Spleen (tissue), 13 donors: ENCODE measurements at regions of chr7 and their contacts with region 1.

Region 1: DNA sequence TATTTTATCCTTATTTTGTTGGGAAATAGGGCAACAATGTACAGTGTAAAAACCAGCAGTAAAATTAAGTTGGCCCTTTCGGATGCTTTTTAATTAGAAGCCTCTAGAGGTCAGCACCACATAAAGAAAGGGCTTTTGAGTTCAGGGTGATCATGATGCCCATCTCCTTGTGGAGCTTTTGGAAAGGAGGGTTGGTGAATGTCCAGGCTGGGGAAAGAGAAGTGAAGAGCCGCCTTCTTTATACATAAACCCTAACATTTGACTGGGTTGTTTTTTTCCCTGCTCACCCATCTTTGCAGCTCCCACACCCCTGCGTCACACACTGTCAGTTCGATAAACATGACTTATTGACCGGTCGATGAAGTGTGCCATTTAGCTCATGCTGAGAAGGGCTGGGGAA is 29.8 kb downstream of the MTURN start:
- DNase-seq: no peak
- H3K4me3 ChIP-seq: no peak overlapping the region
- H3K27ac ChIP-seq: peak overlapping the region in 4 of 8 donors; percentile 14 to 72 (median 42)
- H3K4me1 ChIP-seq: peaks cover 16 to 64% (median 47%) of the 10 kb centered on the region in 6 donors
- H3K27me3 ChIP-seq: no peaks in the 10 kb centered on the region
- CTCF ChIP-seq: peak; percentile 14 to 65 (median 55)
- POLR2A ChIP-seq: no peak

Region 2: GRCh38 chr7:29612596-29612995 is 552.0 kb before region 1 on chr7:
- intact Hi-C with region 1: no loop called
- DNase-seq: no peak
- H3K4me3 ChIP-seq: no peak overlapping the region
- H3K27ac ChIP-seq: no peak overlapping the region
- H3K4me1 ChIP-seq: no peaks in the 10 kb centered on the region
- H3K27me3 ChIP-seq: no peaks in the 10 kb centered on the region
- CTCF ChIP-seq: no peak
- POLR2A ChIP-seq: no peak

Region 3: GRCh38 chr7:30276203-30276900 is 111.8 kb after region 1 on chr7:
- intact Hi-C with region 1: loop called (anchors 10 kb)
- DNase-seq: no peak
- H3K4me3 ChIP-seq: no peak overlapping the region
- H3K27ac ChIP-seq: no peak overlapping the region
- H3K4me1 ChIP-seq: peaks cover 0 to 32% (median 12%) of the 10 kb centered on the region in 6 donors
- H3K27me3 ChIP-seq: no peaks in the 10 kb centered on the region
- CTCF ChIP-seq: peak in 9 of 11 experiments; percentile 36 to 69 (median 57)
- POLR2A ChIP-seq: no peak

Region 4: DNA sequence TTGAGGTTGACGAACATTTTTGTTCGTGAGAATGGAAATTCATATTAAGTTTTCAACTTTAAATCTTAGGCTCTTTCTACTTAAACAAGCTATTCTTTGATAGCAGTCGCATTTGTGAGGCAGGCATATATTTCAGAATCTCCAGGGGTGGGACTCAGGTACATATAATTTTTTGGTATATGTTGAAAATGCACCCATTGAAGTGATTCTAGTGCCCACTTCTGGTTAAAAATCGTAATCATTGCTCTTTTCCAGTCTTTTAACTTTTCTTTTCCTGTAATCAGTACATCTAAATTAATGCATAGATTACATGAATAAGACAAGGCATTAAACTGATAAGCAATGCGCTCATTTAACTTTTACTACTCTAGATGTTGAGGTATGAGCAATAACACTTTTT is 187.6 kb after region 1 on chr7:
- intact Hi-C with region 1: loop called (anchors 10 kb)
- DNase-seq: no peak
- H3K4me3 ChIP-seq: no peak overlapping the region
- H3K27ac ChIP-seq: no peak overlapping the region
- H3K4me1 ChIP-seq: peaks cover 18 to 75% (median 49%) of the 10 kb centered on the region in 6 donors
- H3K27me3 ChIP-seq: no peaks in the 10 kb centered on the region
- CTCF ChIP-seq: peak in 2 of 11 experiments; percentile 31 to 34
- POLR2A ChIP-seq: no peak

Region 5: DNA sequence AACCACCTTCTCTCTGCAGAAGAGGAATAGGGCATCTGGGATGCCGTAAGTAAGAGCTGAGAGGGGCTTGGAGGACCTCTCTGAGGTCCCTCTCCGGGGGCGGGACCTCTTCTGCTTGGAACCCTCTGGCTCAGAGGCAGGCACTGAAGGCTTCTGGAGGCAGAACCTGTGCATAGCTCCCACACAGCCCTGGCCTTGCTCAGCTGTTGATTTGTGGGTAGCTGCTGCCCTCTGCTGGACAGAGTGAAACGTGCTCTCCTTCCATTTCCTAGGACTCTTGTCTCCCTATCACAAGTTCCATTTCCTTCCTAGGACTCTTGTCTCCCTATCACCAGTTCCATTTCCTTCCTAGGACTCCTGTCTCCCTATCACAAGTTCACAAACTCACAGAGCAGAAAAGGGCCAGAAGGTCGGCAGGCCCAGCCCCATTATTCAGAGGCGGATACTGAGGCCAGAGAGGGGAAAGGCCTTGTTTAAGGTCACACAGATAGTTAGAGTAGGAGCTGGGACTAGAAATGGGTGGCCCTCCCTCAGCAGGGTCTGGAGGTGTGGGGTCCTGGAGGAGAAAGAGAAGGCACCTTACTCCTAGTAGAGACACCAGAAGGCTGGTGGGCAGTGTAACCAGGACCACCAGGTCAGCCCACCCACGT is 399.8 kb after region 1 on chr7:
- intact Hi-C with region 1: loop called (anchors 10 kb)
- DNase-seq: peak; percentile 88
- H3K4me3 ChIP-seq: no peak overlapping the region
- H3K27ac ChIP-seq: no peak overlapping the region
- H3K4me1 ChIP-seq: peaks cover 0 to 28% (median 11%) of the 10 kb centered on the region in 6 donors
- H3K27me3 ChIP-seq: no peaks in the 10 kb centered on the region
- CTCF ChIP-seq: peak; percentile 65 to 92 (median 84)
- POLR2A ChIP-seq: no peak

Region 6: DNA sequence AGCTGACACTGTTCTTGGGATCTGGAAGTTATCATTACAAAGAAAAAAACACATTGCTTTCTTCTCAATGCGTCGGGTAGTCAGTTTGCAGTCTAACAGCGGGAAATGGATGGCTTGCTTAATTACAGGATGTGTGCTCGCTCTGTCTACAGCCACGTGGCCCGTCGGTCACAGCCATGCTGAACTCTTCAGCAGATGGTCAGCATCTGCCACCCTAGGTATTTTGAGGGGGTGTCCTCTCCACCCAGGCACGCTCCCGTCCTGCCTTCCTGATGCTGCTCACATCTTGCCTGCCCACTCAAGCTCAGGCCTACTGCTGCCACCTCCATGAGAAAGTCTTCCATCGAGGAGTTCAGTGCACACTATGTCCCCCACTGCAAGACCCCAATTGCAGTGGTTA is 567.1 kb after region 1 on chr7:
- intact Hi-C with region 1: loop called (anchors 10 kb)
- DNase-seq: no peak
- H3K4me3 ChIP-seq: no peak overlapping the region
- H3K27ac ChIP-seq: no peak overlapping the region
- H3K4me1 ChIP-seq: peaks cover 0 to 19% (median 4%) of the 10 kb centered on the region in 6 donors
- H3K27me3 ChIP-seq: peaks cover 0 to 16% (median 0%) of the 10 kb centered on the region in 7 donors
- CTCF ChIP-seq: no peak
- POLR2A ChIP-seq: no peak